ENCODE measurements at regions of chrX and their contacts with region 1.

Region 1: GRCh38 chrX:71365876-71366673 is at the start of gene TAF1:
- DNase-seq: peak; percentile 90
- CTCF ChIP-seq: no peak

Region 2: GRCh38 chrX:71222929-71223328 is 143.1 kb before region 1 on chrX and contains the start of gene GJB1:
- CTCF ChIA-PET with region 1: no interaction called
- POLR2A ChIA-PET with region 1: no interaction called
- DNase-seq: no peak
- CTCF ChIP-seq: no peak

Region 3: GRCh38 chrX:71283403-71284143 is 82.5 kb before region 1 on chrX and contains the start of gene NONO:
- CTCF ChIA-PET with region 1: no interaction called
- POLR2A ChIA-PET with region 1: interaction called, 12 read pairs
- DNase-seq: peak; percentile 88
- CTCF ChIP-seq: no peak

Measured in GM10248 (cell line).